SK-N-SH (cell line): ENCODE measurements at regions of chr19 and their contacts with region 1.

Region 1: DNA sequence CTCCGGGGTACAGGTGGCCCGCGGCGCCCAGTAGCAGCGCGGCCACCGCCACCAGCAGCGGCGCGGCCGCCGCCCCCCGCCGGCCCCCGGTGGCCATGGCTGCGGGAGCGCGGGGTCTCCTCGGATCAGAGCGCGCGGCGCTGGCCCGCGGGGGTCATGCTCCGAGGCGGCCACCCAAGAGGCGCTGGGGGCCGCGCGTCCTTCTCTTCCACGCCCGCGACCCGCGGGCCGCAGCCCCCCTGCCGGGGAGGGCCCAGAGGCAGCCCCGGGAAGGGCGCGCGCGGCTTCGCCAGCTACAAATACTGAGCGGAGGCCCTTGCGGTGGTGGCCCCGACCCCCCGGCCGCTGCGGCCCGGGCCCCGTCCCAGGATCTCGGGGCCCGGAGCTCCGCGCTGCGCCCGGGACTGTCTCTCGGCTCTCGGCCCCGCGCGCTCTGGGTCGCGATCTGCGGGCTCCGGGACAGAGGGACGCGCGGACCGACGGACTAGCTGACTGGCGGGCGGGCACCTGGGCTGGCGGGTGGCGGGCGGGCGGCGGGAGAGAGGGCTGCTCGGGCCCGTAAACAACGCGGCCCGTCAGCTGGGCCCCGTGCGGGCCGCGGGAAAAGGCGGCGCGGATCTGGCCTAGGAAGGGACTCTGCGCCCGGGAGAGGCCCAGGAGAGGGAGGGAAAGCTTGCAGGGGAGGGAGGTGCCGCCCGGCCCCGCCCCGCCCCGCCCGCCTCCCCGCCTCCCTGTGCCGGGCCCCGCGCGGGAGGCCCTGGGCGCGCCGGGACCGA is at the start of gene INSR:
- DNase-seq: peak; percentile 99
- H3K4me3 ChIP-seq: peak within 1 kb of the TSS; percentile 62 to 72
- H3K27ac ChIP-seq: peak within 1 kb of the TSS in 1 of 2 experiments; percentile 19; a peak in 1 of 4 replicates
- H3K4me1 ChIP-seq: peaks cover 5 to 9% of the 10 kb centered on the region in 2 experiments; a peak in 2 of 4 replicates
- H3K27me3 ChIP-seq: no peaks in the 10 kb centered on the region; the same call in none of the 2 replicates
- CTCF ChIP-seq: no peak
- EP300 ChIP-seq: no peak
- RAD21 ChIP-seq: no peak
- polyA plus RNA-seq, gene INSR: 1.9 and 3.6 TPM in 2 replicates

Region 2: GRCh38 chr19:7197760-7198696 is 96.0 kb before region 1 on chr19:
- CTCF ChIA-PET with region 1: interaction called, 9 read pairs
- POLR2A ChIA-PET with region 1: interaction called, 13 read pairs
- DNase-seq: peak; percentile 97
- H3K4me3 ChIP-seq: peak overlapping the region; percentile 58 to 79
- H3K27ac ChIP-seq: peak overlapping the region; percentile 33 to 58; a peak in 1 of 4 replicates
- H3K4me1 ChIP-seq: peaks cover 3% of the 10 kb centered on the region in 2 experiments; a peak in 1 of 4 replicates
- H3K27me3 ChIP-seq: no peaks in the 10 kb centered on the region
- CTCF ChIP-seq: peak; percentile 27; the same call in 1 of the 2 replicates
- EP300 ChIP-seq: no peak
- RAD21 ChIP-seq: no peak

Region 3: GRCh38 chr19:7311911-7312310 is 17.9 kb after region 1 on chr19:
- CTCF ChIA-PET with region 1: no interaction called
- POLR2A ChIA-PET with region 1: no interaction called
- DNase-seq: no peak
- H3K4me3 ChIP-seq: no peak overlapping the region
- H3K27ac ChIP-seq: no peak overlapping the region
- H3K4me1 ChIP-seq: no peaks in the 10 kb centered on the region
- H3K27me3 ChIP-seq: peaks cover 3% of the 10 kb centered on the region
- CTCF ChIP-seq: no peak
- EP300 ChIP-seq: no peak
- RAD21 ChIP-seq: no peak